HepG2 (cell line): ENCODE measurements at regions of chr12 and their contacts with region 1.

Region 1: GRCh38 chr12:120200364-120200800 is 529 bp downstream of the RPLP0 start:
- DNase-seq: no peak
- ATAC-seq: no peak
- H3K4me3 ChIP-seq: peak overlapping the region; percentile 86 to 99 (median 99)
- H3K27ac ChIP-seq: peak overlapping the region; percentile 91
- H3K4me1 ChIP-seq: peaks cover 57% of the 10 kb centered on the region
- H3K27me3 ChIP-seq: no peaks in the 10 kb centered on the region; a peak in 1 of 5 replicates
- CTCF ChIP-seq: no peak
- EP300 ChIP-seq: no peak
- POLR2A ChIP-seq: no peak
- RAD21 ChIP-seq: no peak

Region 2: DNA sequence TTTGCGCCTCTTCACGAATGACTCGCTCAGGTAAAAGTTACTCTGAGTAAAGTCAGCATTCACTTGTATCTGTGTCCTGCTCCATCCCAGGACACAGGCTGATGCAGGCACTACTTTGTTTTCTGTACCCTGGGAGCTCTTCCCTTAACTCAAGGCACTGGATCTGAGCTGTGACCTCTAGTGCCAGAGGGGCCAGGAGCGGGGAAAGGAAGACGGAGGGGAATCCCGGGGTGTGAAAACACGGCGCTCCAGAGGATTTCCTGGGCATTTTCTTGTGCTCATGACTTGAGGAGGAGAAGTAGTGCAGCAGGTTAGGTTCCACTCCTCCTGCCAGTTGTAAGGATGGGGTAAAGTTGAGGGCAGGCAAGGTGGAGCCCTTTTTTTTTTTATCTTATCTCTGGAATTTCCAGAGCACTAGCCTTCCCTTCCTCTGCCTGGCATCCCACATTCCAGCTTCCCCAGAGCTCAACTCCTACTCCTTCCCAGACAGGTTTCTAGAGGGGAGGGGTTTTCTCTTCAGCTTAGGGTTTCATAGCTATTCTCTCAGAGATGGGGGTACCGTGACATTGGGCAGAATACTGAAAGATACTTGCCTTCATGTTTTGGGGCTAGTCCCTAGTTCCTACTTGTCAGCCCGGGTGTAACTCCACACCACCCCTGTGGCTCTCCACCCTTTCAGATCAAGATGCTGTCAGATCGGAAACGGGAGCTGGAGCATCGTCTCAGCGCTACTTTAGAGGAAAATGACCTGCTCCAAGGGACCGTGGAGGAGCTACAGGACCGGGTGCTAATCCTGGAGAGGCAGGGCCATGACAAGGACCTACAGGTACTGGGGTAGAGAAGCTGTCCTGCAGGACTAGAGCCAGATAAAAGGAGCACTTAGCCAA is 136.1 kb before region 1 on chr12:
- CTCF ChIA-PET with region 1: no interaction called
- POLR2A ChIA-PET with region 1: no interaction called
- in situ Hi-C with region 1: no loop called
- intact Hi-C with region 1: no loop called
- DNase-seq: no peak
- ATAC-seq: peak; percentile 41; the same call in 1 of the 3 replicates
- H3K4me3 ChIP-seq: no peak overlapping the region; a peak in 1 of 6 replicates
- H3K27ac ChIP-seq: peak overlapping the region; percentile 37
- H3K4me1 ChIP-seq: peaks cover 53% of the 10 kb centered on the region
- H3K27me3 ChIP-seq: no peaks in the 10 kb centered on the region
- CTCF ChIP-seq: no peak
- EP300 ChIP-seq: no peak
- POLR2A ChIP-seq: no peak
- RAD21 ChIP-seq: no peak

Region 3: GRCh38 chr12:120257041-120257821 is 56.8 kb after region 1 on chr12:
- CTCF ChIA-PET with region 1: no interaction called
- POLR2A ChIA-PET with region 1: interaction called, 22 read pairs
- in situ Hi-C with region 1: no loop called
- intact Hi-C with region 1: no loop called
- DNase-seq: no peak
- ATAC-seq: peak; percentile 40
- H3K4me3 ChIP-seq: no peak overlapping the region
- H3K27ac ChIP-seq: no peak overlapping the region
- H3K4me1 ChIP-seq: peaks cover 57% of the 10 kb centered on the region
- H3K27me3 ChIP-seq: no peaks in the 10 kb centered on the region
- CTCF ChIP-seq: no peak
- EP300 ChIP-seq: no peak
- POLR2A ChIP-seq: no peak
- RAD21 ChIP-seq: no peak

Region 4: GRCh38 chr12:120265473-120266179 is 65.2 kb after region 1 on chr12 and contains the start of gene PXN:
- CTCF ChIA-PET with region 1: no interaction called
- POLR2A ChIA-PET with region 1: interaction called, 44 read pairs
- in situ Hi-C with region 1: no loop called
- intact Hi-C with region 1: no loop called
- DNase-seq: peak; percentile 73
- ATAC-seq: peak; percentile 80
- H3K4me3 ChIP-seq: peak within 1 kb of the TSS; percentile 76 to 97 (median 88)
- H3K27ac ChIP-seq: peak within 1 kb of the TSS; percentile 53
- H3K4me1 ChIP-seq: peaks cover 71% of the 10 kb centered on the region
- H3K27me3 ChIP-seq: no peaks in the 10 kb centered on the region
- CTCF ChIP-seq: peak; percentile 85
- EP300 ChIP-seq: peak in 1 of 2 experiments; percentile 41; a peak in 1 of 4 replicates
- POLR2A ChIP-seq: peak; percentile 41 to 66; a peak in 3 of 4 replicates
- RAD21 ChIP-seq: peak; percentile 91
- total RNA-seq, gene PXN: 13.6 and 14.2 TPM in 2 replicates

Region 5: GRCh38 chr12:120286796-120287465 is 86.5 kb after region 1 on chr12:
- CTCF ChIA-PET with region 1: no interaction called
- POLR2A ChIA-PET with region 1: interaction called, 138 read pairs
- in situ Hi-C with region 1: no loop called
- intact Hi-C with region 1: no loop called
- DNase-seq: no peak
- ATAC-seq: no peak
- H3K4me3 ChIP-seq: no peak overlapping the region
- H3K27ac ChIP-seq: no peak overlapping the region
- H3K4me1 ChIP-seq: peaks cover 19% of the 10 kb centered on the region; the same call in 1 of the 2 replicates
- H3K27me3 ChIP-seq: peaks cover 0 to 1% of the 10 kb centered on the region in 2 experiments; a peak in 3 of 5 replicates
- CTCF ChIP-seq: no peak
- EP300 ChIP-seq: no peak
- POLR2A ChIP-seq: no peak
- RAD21 ChIP-seq: no peak

Region 6: DNA sequence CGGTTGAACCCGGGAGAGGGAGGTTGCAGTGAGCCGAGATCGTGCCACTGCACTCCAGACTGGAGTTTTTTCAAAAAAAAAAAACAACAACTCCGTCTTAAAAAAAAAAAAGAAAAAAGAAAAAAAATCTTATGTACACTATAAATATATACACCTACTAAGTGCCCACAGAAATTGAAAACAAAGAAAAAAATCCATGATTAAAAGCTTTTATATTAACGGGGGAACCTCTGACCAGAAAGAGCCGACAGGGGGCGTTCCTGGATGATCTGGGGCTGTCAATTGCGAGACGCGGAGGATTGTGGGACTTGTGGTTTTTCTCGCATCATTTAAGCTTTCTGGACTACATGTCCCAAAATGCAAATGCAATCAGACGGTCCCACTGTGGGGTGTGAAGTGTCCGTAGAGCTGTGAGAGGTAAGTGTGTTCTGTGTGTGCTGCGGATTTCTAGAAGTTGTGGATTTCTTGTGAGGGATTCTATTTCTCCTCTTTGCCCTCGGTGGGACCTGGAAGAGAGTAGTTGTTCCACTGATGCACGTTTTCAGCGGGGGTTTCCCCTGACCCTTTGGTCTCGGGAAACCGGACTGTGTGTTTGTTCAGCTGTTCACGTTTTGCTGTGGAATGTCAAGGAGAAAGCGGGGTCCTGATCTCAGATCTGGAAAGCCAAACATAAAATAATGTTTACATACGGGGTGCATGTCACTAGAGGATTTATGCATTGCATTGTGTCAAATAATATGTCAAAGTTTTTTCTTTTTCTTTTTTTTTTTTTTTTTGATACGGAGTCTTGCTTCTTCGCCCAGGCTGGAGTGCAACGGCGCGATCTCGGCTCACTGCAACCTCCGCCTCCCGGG is 101.8 kb after region 1 on chr12 and contains the start of gene SIRT4:
- CTCF ChIA-PET with region 1: no interaction called
- POLR2A ChIA-PET with region 1: interaction called, 15 read pairs
- in situ Hi-C with region 1: no loop called
- intact Hi-C with region 1: no loop called
- DNase-seq: peak; percentile 93
- ATAC-seq: peak; percentile 96
- H3K4me3 ChIP-seq: peak within 1 kb of the TSS; percentile 66 to 79 (median 71)
- H3K27ac ChIP-seq: peak within 1 kb of the TSS; percentile 70
- H3K4me1 ChIP-seq: peaks cover 10% of the 10 kb centered on the region
- H3K27me3 ChIP-seq: no peaks in the 10 kb centered on the region
- CTCF ChIP-seq: peak; percentile 82
- EP300 ChIP-seq: 0 out of 4 replicates have a peak, but pooled peaks of 1 of the 2 experiments have one; percentile 12
- POLR2A ChIP-seq: peak; percentile 45 to 53
- RAD21 ChIP-seq: 0 out of 2 replicates have a peak, but pooled peaks have one; percentile 15
- total RNA-seq, gene SIRT4: 3.4 and 7.0 TPM in 2 replicates

Region 7: DNA sequence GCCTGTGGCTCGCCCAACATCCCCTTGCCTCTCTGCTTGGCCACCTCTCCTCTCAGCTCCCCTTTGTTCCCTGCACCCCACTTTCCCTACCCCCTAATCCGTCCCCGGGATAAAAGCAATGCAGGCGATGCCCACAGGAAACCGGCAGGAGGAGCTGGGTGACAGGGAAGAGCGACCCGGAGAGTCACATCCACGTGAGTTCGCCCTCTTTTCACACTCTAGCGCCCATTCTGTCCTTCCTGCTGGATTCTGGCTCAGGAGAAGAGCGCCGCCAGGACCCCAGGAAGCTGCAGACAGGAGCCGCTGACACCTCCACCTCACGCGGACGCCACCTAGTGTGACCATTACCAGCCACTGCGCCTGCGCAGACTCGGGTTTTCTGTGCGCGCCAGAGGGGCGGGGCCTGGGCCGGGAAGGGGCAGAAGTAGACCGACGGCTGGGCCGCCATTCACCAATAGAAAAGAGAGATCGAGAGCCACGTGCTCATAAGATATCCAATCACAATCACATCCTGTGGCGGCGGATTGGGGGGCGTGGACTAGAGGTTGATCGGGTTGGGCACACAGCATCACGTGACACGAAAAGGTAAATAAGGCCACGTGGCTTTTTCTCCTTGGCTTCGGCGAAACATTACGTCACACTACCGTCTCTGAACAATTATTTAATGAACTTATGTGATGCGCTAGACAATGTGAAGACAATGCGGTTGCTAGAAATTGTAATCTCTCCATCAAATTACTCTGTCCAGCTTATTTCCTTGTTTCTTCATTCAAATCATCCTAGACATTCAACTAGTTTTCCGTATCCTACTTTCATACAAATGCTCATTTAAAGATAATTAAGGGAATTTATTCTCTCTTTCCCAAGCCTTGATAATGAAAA is 117.1 kb after region 1 on chr12:
- CTCF ChIA-PET with region 1: no interaction called
- POLR2A ChIA-PET with region 1: interaction called, 12 read pairs
- in situ Hi-C with region 1: no loop called
- intact Hi-C with region 1: no loop called
- DNase-seq: peak; percentile 99
- ATAC-seq: peak; percentile 89
- H3K4me3 ChIP-seq: peak overlapping the region; percentile 70 to 82 (median 70)
- H3K27ac ChIP-seq: peak overlapping the region; percentile 90
- H3K4me1 ChIP-seq: peaks cover 34% of the 10 kb centered on the region
- H3K27me3 ChIP-seq: no peaks in the 10 kb centered on the region; a peak in 1 of 5 replicates
- CTCF ChIP-seq: peak; percentile 81
- EP300 ChIP-seq: peak in 1 of 2 experiments; percentile 23; a peak in 1 of 4 replicates
- POLR2A ChIP-seq: peak; percentile 84 to 90
- RAD21 ChIP-seq: 0 out of 2 replicates have a peak, but pooled peaks have one; percentile 30